Right cardiac atrium (tissue), 5 donors: ENCODE measurements at regions of chr16 and their contacts with region 1.

Region 1: GRCh38 chr16:21338537-21339268 is 60.6 kb upstream of the CRYM start:
- DNase-seq: no peak
- ATAC-seq: no peak
- H3K4me3 ChIP-seq: no peak overlapping the region
- H3K27ac ChIP-seq: no peak overlapping the region
- H3K4me1 ChIP-seq: no peaks in the 10 kb centered on the region
- H3K27me3 ChIP-seq: no peaks in the 10 kb centered on the region

Region 2: DNA sequence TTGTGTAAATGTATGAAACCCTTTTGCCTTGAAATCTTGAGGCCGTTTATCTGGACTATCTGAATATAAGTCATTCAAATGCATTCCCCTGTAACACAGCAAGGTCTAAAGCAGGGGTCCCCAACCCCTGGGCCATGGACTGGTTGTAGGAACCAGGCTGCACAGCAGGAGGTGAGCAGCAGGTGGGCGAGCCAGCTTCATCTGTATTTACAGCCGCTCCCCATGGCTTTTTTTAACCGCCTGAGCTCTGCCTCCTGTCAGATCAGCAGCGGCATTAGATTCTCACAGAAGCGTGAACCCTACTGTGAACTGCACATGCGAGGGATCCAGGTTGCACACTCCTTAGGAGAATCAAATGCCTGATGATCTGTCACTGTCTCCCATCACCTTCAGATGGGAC is 212.2 kb before region 1 on chr16:
- intact Hi-C with region 1: no loop called
- DNase-seq: no peak
- ATAC-seq: no peak
- H3K4me3 ChIP-seq: no peak overlapping the region
- H3K27ac ChIP-seq: no peak overlapping the region
- H3K4me1 ChIP-seq: no peaks in the 10 kb centered on the region
- H3K27me3 ChIP-seq: no peaks in the 10 kb centered on the region

Region 3: GRCh38 chr16:22670551-22671041 is 1331.9 kb after region 1 on chr16:
- intact Hi-C with region 1: loop called in 1 of 4 experiments (anchors 10 kb)
- DNase-seq: peak in 1 of 3 donors; percentile 45
- ATAC-seq: peak; percentile 18 to 44
- H3K4me3 ChIP-seq: no peak overlapping the region
- H3K27ac ChIP-seq: no peak overlapping the region
- H3K4me1 ChIP-seq: peaks cover 2% of the 10 kb centered on the region
- H3K27me3 ChIP-seq: no peaks in the 10 kb centered on the region